ENCODE measurements at regions of chr6 and their contacts with region 1.

Region 1: DNA sequence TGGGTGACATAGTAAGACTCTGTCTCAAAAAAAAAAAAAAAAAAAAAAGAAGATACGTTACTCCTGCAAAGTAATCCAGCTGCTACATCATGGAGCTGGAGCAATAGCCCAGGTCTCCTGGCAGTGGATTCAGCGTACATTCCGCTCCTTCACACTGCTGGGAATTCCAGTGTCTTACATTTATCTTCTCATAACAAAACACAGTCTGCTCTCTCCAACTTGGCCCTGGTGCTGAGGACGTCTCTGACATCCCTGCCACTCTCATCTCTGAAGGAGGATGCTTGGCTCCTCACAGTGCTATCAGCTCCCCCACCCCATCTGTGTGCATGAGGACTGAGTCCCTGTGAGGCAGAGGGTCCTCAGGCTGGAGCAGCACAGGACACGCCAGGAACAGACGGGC is 529.8 kb downstream of the CD83 start:
- DNase-seq: no peak
- ATAC-seq: no peak

Region 2: DNA sequence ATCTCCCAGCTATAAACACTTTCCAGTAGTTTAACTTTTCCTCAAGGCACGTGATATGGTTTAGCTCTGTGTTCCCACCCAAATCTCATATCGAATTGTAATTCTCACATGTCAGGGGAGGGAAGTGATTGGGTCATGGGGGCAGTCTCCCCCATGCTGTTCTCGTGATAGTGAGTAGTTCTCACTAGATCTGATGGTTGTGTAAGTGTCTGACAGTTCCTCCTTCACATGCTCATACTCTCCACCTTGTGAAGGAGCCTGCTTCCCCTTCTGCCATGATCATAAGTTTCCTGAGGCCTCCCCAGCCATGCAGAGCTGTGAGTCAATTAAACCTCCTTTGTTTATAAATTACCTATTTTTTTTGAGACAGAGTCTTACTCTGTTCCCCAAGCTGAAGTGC is 887.6 kb after region 1 on chr6:
- intact Hi-C with region 1: loop called (anchors 5 kb)
- DNase-seq: no peak
- ATAC-seq: no peak